ENCODE measurements at regions of chr1 and their contacts with region 1.

Region 1: DNA sequence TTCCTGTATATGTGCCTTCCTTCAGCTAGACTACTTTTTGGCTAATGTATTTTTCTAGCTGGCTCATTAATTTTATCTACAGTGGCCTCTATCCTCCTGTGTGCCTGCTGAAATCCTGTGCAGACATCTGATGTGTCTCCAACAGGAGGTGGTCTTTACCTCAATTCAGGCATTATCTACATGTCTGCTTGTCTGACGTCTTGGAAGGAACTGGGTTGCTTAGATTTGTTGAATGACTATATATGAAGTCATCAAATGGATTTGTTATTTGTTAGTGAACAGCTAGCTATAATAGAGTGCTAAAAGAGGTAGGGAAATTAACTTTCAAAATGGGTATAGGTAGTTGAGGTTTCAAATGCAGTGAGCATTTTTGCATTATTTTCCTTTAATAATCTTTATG is 6.7 kb downstream of the RPL5 start:
- DNase-seq: no peak
- H3K4me3 ChIP-seq: no peak overlapping the region
- H3K27me3 ChIP-seq: no peaks in the 10 kb centered on the region
- CTCF ChIP-seq: no peak

Region 2: DNA sequence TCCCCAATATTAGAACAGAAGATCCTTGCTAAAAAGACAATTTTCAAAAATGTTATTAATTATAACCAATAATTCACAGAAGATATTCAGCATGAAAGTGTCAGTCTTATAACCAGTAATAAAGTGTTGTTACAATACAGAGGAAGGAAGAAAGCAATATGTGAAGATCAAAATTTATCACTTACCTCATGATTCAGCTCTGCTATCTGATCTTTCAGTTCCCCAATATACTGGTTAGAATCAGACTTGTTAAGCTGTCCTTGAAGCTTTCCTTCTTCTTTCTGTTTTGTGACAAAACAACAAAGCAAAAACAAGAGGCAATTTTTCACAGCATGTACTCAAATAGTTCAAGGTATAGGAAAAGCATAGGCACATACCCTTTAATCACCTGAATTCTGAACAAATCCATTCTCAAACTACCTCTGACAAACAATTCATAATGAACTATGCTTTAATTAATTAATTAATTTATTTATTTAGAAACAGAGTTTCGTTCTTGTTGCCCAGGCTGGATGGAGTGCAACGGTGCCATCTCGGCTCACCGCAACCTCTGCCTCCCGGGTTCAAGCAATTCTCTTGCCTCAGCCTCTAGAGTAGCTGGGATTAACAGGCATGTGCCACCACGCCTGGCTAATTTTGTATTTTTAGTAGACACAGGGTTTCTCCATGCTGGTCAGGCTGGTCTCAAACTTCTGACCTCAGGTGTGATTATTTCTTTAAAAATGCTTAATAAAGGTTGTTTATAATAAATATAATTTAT is 274.9 kb before region 1 on chr1:
- CTCF ChIA-PET with region 1: no interaction called
- POLR2A ChIA-PET with region 1: no interaction called
- DNase-seq: no peak
- H3K4me3 ChIP-seq: no peak overlapping the region
- H3K27me3 ChIP-seq: no peaks in the 10 kb centered on the region
- CTCF ChIP-seq: no peak

Region 3: GRCh38 chr1:92736395-92736794 is 102.1 kb before region 1 on chr1:
- CTCF ChIA-PET with region 1: no interaction called
- POLR2A ChIA-PET with region 1: interaction called, 11 read pairs
- DNase-seq: no peak
- H3K4me3 ChIP-seq: no peak overlapping the region
- H3K27me3 ChIP-seq: no peaks in the 10 kb centered on the region
- CTCF ChIP-seq: 0 out of 2 replicates have a peak, but pooled peaks have one; percentile 10

Region 4: GRCh38 chr1:92929461-92929860 is 90.9 kb after region 1 on chr1:
- CTCF ChIA-PET with region 1: no interaction called
- POLR2A ChIA-PET with region 1: no interaction called
- DNase-seq: no peak
- H3K4me3 ChIP-seq: no peak overlapping the region
- H3K27me3 ChIP-seq: no peaks in the 10 kb centered on the region
- CTCF ChIP-seq: no peak